Heart left ventricle (tissue), 16 donors: ENCODE measurements at regions of chr11 and their contacts with region 1.

Region 1: DNA sequence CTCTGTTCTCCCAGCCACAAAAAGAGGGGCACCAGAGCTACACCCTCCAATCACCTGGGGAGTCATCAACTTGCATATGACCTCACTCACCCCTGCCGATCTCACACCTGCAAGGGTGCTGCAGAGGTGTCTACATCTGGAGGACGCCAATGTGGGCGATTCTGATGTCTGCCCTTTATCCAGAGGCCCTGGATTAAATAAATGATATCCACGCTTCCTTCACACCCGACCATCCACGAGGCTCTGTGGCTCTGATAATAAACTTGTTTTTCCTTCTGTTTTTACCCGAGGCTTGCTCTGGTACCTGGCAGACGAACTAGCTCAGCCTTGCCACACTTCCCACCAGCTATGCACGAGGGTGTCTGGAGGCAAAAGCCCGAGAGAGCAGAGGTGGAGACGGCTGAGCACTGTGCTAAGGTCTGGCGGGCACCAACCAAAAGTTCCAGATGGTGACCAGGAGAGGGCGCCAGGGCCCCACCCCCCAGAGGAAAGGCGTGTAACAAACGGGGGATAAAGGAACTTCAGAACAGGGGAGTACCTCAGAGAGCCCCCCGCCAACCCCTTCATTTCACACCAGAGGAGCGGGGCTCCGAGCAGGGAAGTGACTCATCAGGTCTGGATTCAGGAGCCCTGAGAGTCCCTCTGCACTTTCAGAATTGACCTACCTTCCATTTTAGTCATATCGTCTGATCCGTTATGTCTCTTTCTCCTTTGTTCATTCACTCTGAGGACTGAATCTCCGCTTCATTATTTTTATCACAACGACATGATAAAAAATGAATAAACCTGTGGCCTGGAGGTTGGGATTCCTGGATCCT is 13.5 kb downstream of the SCN3B start:
- DNase-seq: peak; percentile 20 to 68 (median 40)
- ATAC-seq: peak; percentile 70 to 87 (median 83)
- H3K4me3 ChIP-seq: no peak overlapping the region
- H3K27ac ChIP-seq: no peak overlapping the region
- H3K4me1 ChIP-seq: peaks cover 0 to 3% (median 0%) of the 10 kb centered on the region in 12 donors
- H3K27me3 ChIP-seq: no peaks in the 10 kb centered on the region
- CTCF ChIP-seq: peak; percentile 58 to 84 (median 73)
- POLR2A ChIP-seq: no peak

Region 2: GRCh38 chr11:123702139-123702538 is 61.3 kb after region 1 on chr11:
- intact Hi-C with region 1: loop called (anchors 1 to 5 kb)
- DNase-seq: peak in 3 of 5 donors; percentile 11 to 26 (median 22)
- ATAC-seq: no peak
- H3K4me3 ChIP-seq: no peak overlapping the region
- H3K27ac ChIP-seq: no peak overlapping the region
- H3K4me1 ChIP-seq: peaks cover 0 to 3% (median 0%) of the 10 kb centered on the region in 12 donors
- H3K27me3 ChIP-seq: peaks cover 0 to 6% (median 0%) of the 10 kb centered on the region in 9 donors
- CTCF ChIP-seq: no peak
- POLR2A ChIP-seq: no peak

Region 3: DNA sequence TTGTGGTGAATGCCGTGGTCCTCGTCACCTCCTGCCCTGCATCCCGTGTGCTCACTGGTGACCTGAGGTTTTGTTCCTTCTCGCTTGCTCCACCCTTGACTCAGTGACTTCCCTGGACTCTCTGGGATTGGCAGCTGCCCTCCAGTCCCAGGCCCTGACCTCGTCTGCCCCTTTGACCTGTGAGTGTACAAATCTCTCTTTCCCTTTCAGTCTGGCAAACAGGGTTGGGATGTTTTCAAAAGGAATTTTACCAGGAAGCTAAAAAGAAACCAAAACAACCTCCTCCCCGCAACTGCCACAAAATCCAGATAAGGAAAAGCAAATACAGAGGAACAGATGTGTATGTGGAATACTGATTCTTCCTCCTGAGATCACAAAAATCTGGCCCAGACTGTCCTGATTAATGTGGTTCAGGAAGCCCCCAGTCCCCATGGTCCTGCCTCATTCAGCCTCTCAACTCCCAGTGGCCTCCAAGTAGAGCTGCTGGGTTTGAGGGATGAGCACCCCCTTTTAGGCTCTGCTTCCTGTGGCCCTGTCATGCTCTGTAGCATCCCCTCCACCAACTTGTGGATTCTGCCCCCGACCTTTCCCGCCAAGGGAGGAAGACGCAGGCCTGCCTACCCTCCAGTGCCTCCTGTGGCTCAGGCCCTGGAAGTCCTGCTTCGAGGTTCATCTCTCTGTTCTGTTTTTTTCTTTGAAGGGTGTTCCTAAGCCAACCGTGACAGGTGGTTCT is 1241.6 kb after region 1 on chr11:
- intact Hi-C with region 1: no loop called
- DNase-seq: peak in 3 of 5 donors; percentile 8 to 25 (median 15)
- ATAC-seq: peak in 1 of 4 donors; percentile 39
- H3K4me3 ChIP-seq: no peak overlapping the region
- H3K27ac ChIP-seq: peak overlapping the region in 11 of 12 donors; percentile 27 to 68 (median 41)
- H3K4me1 ChIP-seq: peaks cover 0 to 41% (median 21%) of the 10 kb centered on the region in 12 donors
- H3K27me3 ChIP-seq: peaks cover 0 to 14% (median 0%) of the 10 kb centered on the region in 9 donors
- CTCF ChIP-seq: no peak
- POLR2A ChIP-seq: no peak